ENCODE measurements at regions of chr3 and their contacts with region 1.

Region 1: GRCh38 chr3:100400780-100401673 is at the starts of genes LNP1 and TOMM70:
- DNase-seq: peak; percentile 86
- ATAC-seq: peak; percentile 92
- H3K4me3 Mint-ChIP-seq: peak within 1 kb of the TSS; percentile 96
- H3K27ac Mint-ChIP-seq: peak within 1 kb of the TSS; percentile 95
- H3K4me1 Mint-ChIP-seq: peaks cover 58% of the 10 kb centered on the region
- H3K27me3 Mint-ChIP-seq: no peaks in the 10 kb centered on the region
- CTCF ChIP-seq: no peak
- total RNA-seq, gene LNP1: 1.7 and 2.4 TPM in 2 replicates
- total RNA-seq, gene TOMM70: 34.5 and 37.3 TPM in 2 replicates

Region 2: DNA sequence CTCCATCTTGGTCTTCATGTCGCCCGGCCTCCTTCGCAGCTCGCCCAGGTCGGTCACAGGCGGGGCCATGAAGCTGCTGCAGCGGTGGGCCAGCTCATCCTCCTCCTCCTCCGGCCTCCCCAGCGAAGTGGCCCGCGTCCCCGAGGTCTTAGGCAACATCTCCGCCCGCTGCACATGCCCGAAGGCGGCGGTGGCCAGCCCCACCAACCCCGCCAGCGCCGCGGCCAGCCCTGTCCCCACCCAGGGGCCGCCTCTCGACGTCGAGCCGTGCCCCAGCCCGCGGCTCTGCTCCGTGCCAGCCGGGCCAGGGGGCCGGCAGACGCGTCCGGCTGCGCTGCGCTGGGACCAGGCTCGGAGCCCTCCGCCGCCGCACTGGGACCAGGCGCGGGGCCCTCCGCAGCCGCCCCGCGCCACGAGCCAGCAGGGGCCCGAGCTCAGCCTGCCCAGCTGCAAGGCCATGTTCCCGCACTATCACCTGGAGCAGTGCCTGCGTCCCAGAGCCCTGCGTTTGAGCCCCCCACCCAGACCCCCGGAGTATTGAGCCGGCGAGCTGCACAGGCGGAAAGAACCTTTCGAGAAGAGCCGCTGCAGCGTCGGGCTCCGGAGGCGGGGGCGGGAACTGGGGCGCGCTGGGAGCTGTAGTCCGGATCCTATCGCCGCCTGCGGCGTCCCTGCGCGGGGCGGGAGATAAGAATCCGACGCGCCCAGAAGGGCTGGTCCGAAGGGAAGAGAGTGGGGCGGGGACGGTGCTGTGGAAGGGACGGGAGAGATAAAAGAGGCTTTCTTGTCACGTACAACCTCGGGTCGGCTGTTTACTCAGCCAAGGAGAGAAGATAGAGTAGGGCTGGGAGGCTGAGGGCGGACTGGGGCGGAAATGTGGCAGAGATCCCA is 1807.7 kb before region 1 on chr3 and contains the start of gene CPOX:
- CTCF ChIA-PET with region 1: no interaction called
- POLR2A ChIA-PET with region 1: no interaction called
- intact Hi-C with region 1: loop called (anchors 1 kb)
- DNase-seq: peak; percentile 70
- ATAC-seq: peak; percentile 95
- H3K4me3 Mint-ChIP-seq: peak within 1 kb of the TSS; percentile 97
- H3K27ac Mint-ChIP-seq: peak within 1 kb of the TSS; percentile 91
- H3K4me1 Mint-ChIP-seq: peaks cover 33% of the 10 kb centered on the region
- H3K27me3 Mint-ChIP-seq: no peaks in the 10 kb centered on the region
- CTCF ChIP-seq: no peak
- total RNA-seq, gene CPOX: 17.3 and 17.5 TPM in 2 replicates

Region 3: DNA sequence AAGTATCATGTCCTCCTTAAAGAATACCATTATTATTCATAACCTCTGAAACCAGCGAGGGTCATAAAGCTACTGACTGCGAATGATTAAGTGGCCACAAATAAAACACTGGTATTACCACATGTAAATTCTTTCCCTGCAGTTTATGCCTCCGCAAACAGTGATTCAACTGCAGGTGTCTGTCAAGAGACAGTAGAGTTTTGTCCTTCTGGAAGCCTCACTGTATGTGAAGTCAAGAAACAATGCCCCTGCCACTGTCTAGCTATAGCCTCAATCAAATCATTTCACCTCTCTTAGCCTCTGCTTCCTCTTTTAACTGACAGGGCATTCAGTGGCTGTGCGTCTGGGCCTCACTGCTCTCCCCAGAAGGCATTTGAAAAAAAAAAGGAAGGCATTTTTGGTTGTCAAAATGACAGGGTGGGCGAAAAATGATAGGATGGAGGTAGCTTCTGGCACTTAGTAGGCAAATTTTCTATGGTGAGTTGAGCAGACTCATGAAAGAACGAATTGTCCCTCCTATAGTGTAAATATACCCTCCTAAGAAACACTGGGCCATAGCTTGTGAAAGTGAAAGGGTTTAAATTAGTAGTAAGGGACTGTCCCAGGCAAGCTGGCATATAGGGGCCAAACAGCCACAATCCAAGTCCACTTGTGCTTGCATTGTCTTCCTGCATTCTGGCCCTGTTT is 353.4 kb before region 1 on chr3:
- CTCF ChIA-PET with region 1: no interaction called
- POLR2A ChIA-PET with region 1: interaction called, 3 read pairs
- intact Hi-C with region 1: loop called (anchors 2 kb)
- DNase-seq: no peak
- ATAC-seq: peak; percentile 72
- H3K4me3 Mint-ChIP-seq: peak overlapping the region; percentile 81
- H3K27ac Mint-ChIP-seq: peak overlapping the region; percentile 97
- H3K4me1 Mint-ChIP-seq: peaks cover 67% of the 10 kb centered on the region
- H3K27me3 Mint-ChIP-seq: no peaks in the 10 kb centered on the region
- CTCF ChIP-seq: no peak

Region 4: DNA sequence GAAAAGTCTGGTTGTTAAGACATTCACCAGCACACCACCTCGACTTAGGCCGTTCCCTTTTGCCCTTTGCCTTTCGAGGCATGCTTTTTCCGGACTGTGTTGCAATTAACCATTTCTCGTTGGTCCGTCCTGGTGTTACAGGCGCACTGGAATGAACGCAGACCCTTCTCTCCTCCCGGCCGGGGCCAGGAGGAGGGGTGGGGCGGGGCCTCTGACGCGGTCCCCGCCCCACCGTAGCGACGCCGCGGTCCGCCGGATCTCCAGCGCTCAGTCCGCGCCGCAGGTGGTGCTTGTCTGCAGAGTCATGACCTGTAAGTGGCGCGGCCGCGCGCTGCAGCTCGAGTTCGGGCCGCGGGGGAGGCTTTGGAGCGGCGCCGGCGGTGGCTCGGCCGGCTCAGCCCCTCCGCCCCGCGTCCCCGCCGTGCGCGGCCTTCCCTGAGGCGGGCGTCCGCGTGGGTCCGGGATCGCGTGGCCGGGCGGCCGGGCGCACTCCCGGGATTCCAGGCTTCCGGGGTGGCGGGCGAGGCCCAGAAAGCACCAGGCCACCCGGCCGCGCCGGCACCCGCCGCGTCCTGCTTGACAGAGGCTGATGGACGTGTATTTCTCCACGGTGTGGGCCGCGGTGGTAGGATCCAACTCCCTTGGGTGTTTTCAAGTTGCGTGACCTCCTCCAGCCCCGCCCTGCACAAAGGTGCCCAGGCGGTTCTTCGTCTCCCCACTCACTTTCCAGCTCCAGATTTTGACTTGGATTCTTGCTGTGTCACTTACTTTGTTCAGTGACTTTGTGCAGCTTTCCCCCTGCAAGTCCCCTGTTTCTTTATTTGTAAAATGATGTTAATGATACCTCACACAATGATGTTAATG is 66.3 kb before region 1 on chr3 and contains the start of gene NIT2:
- CTCF ChIA-PET with region 1: no interaction called
- POLR2A ChIA-PET with region 1: interaction called, 25 read pairs
- intact Hi-C with region 1: loop called (anchors 1 kb)
- DNase-seq: peak; percentile 72
- ATAC-seq: peak; percentile 96
- H3K4me3 Mint-ChIP-seq: peak within 1 kb of the TSS; percentile 91
- H3K27ac Mint-ChIP-seq: peak within 1 kb of the TSS; percentile 92
- H3K4me1 Mint-ChIP-seq: peaks cover 19% of the 10 kb centered on the region
- H3K27me3 Mint-ChIP-seq: no peaks in the 10 kb centered on the region
- CTCF ChIP-seq: no peak
- total RNA-seq, gene NIT2: 52.0 and 55.6 TPM in 2 replicates

Region 5: GRCh38 chr3:100708967-100709841 is 308.2 kb after region 1 on chr3 and contains the start of gene TFG:
- CTCF ChIA-PET with region 1: no interaction called
- POLR2A ChIA-PET with region 1: interaction called, 18 read pairs
- intact Hi-C with region 1: loop called (anchors 1 kb)
- DNase-seq: peak; percentile 97
- ATAC-seq: peak; percentile 90
- H3K4me3 Mint-ChIP-seq: peak within 1 kb of the TSS; percentile 88
- H3K27ac Mint-ChIP-seq: peak within 1 kb of the TSS; percentile 92
- H3K4me1 Mint-ChIP-seq: peaks cover 40% of the 10 kb centered on the region
- H3K27me3 Mint-ChIP-seq: peaks cover 17% of the 10 kb centered on the region
- CTCF ChIP-seq: no peak
- total RNA-seq, gene TFG: 42.5 and 44.5 TPM in 2 replicates

Region 6: DNA sequence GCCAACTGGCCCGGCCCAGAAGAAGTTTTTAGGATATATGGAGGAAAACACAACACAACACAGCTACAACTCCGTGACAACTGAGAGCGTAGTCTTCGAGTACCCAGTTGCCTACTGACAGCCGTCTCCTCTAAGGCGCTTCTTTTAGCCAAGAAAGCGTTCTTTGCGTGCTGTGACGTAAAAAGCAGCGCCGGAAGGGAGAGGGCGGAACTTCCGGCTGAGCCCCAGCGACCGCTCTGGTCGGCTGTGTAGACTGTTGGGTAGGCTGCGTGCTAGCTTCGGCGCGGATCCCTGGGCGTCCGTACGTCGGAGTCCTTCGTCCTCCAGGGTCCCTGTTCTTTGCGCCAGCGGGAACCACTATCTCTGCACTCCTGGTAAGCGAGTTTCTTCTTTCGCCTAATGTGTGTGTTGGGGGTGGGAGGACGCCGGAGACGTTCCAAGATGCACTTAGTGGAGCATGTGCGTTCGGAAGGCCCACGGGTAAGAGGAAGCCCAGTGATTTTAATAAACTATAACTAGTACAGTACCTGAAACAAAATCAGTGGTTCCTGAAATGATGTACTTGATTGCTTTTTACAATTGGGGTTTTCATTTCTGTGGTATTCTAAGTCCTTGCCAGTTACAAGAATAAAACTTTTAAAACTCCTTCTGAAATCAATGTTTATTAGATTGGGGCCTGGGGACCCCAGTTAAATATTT is 1160.8 kb after region 1 on chr3 and contains the start of gene TRMT10C:
- CTCF ChIA-PET with region 1: no interaction called
- POLR2A ChIA-PET with region 1: interaction called, 3 read pairs
- intact Hi-C with region 1: loop called (anchors 5 kb)
- DNase-seq: peak; percentile 88
- ATAC-seq: peak; percentile 96
- H3K4me3 Mint-ChIP-seq: peak within 1 kb of the TSS; percentile 99
- H3K27ac Mint-ChIP-seq: peak within 1 kb of the TSS; percentile 95
- H3K4me1 Mint-ChIP-seq: peaks cover 42% of the 10 kb centered on the region
- H3K27me3 Mint-ChIP-seq: peaks cover 4% of the 10 kb centered on the region
- CTCF ChIP-seq: no peak
- total RNA-seq, gene TRMT10C: 33.5 and 34.6 TPM in 2 replicates

Measured in activated B cell treated with CpG ODN at 0.5 μM for 24 hours (primary cell).